Mammary epithelial cell (primary cell): ENCODE measurements at regions of chr6 and their contacts with region 1.

Region 1: DNA sequence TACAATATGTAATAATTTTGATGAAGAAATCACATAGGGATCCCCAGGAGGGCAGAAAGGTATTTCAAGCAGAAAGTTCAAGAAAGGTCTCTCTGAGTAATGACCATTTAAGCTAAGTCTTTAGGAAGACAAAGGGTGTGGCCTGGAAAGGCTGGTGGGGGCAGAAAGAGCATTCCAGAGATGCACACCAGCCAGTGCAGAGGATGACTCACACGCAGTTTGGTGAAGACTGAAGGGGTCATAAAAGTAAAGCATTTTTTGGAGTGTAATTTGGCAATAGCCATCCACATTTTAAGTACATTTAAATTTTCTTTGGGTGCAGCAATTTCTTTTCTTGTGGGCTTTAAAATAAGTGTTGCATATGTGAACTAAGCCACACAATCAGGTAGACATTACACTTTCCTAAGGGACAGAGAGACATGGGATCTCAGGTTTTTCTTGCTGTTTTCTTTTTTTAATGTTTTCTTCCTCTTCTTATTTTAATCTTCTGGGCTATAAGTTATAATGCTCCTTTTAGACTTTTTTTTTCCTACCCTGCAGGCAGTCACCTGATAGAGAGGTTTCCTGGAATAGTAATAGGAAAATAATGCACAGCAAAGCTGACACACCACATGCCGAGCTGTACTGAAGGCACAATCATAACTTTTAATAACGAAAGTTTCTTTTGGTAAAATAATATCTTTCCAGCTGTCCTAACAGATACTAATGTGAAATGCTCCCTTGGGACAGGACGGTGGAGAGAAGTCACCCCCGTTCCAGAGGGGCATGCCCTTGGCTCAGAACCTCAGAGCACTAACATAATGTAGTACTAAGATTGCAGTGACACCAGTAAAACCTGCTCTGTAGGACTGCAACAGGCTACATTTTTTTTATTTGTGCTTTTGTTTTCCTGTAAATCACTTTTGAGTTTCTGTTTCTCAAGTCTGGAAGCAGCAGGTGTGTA is 49.6 kb upstream of the PTPRK start:
- DNase-seq: peak; percentile 81
- H3K4me3 ChIP-seq: no peak overlapping the region
- H3K27ac ChIP-seq: peak overlapping the region; percentile 61
- H3K4me1 ChIP-seq: peaks cover 38% of the 10 kb centered on the region
- H3K27me3 ChIP-seq: no peaks in the 10 kb centered on the region
- CTCF ChIP-seq: no peak

Region 2: DNA sequence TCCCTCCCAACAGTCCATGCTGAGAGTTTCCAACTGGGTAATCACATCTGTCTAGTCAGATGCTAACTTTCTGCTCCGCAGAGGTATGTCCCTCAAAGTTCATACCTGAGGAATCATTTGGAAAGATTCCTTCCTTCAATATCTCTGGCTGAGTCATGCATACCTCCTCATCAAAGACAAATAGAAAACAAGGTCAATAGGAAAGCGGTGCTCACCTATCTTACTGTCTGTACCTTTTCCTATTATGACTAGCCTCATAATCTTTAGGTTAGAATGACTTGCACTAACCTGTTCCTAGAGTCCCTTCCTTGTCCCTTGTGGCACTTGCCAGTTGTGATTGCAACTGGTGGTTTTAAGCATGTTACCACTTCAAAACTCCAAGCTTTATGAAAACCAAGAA is 28.6 kb after region 1 on chr6:
- CTCF ChIA-PET with region 1: no interaction called
- dilution Hi-C with region 1: no loop called
- in situ Hi-C with region 1: no loop called
- intact Hi-C with region 1: loop called (anchors 1 kb)
- DNase-seq: peak; percentile 73
- H3K4me3 ChIP-seq: peak overlapping the region in 1 of 3 experiments; percentile 5
- H3K27ac ChIP-seq: peak overlapping the region; percentile 95
- H3K4me1 ChIP-seq: peaks cover 64% of the 10 kb centered on the region
- H3K27me3 ChIP-seq: no peaks in the 10 kb centered on the region
- CTCF ChIP-seq: no peak